ENCODE measurements at regions of chr9 and their contacts with region 1.

Region 1: DNA sequence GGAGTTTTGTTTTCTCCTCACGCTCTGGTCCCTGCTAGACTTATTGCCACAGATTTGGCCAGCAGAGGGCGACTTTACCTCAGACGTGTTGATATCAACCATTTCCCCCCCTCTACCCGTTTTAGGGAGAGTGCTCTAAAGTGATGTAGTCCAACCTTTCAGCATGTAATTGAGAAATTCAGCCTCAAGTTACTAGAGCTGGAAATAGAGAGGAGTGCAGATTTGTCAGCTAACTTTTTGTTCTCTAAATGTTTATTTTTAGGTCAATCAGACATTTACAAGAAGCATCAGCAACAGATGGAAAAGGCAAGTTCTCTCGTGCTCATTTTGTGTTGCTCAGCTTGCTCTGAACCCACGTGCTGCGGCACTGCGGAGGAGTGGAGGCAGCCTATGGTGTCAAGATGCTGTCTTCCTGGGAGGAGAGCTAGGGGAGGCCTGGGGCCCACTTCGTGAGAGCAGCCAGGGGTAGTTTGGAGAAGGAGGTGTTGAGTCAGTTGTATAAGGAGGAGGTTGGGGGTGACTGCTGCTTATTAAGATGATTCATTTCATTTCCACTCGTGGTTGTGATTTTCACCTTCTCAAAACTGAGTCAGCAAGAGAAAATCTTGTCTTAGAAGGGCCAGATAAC is 53.6 kb downstream of the GPR107 start:
- DNase-seq: peak; percentile 79 to 96 (median 88)
- H3K4me3 ChIP-seq: no peak overlapping the region
- H3K27ac ChIP-seq: peak overlapping the region in 43 of 59 donors; percentile 2 to 79 (median 53)
- H3K27me3 ChIP-seq: no peaks in the 10 kb centered on the region
- CTCF ChIP-seq: peak; percentile 67 to 96 (median 88)

Region 2: GRCh38 chr9:129932303-129933151 is 174.8 kb before region 1 on chr9:
- intact Hi-C with region 1: loop called in 1 of 2 experiments (anchors 5 kb)
- DNase-seq: peak in 1 of 10 donors; percentile 77
- H3K4me3 ChIP-seq: peak overlapping the region in 11 of 59 donors; percentile 0 to 38 (median 10)
- H3K27ac ChIP-seq: peak overlapping the region; percentile 38 to 96 (median 88)
- H3K27me3 ChIP-seq: no peaks in the 10 kb centered on the region
- CTCF ChIP-seq: no peak

Region 3: GRCh38 chr9:130235897-130236668 is 128.7 kb after region 1 on chr9:
- intact Hi-C with region 1: loop called (anchors 1 to 2 kb)
- DNase-seq: peak in 9 of 10 donors; percentile 61 to 81 (median 68)
- H3K4me3 ChIP-seq: peak overlapping the region in 36 of 59 donors; percentile 1 to 47 (median 34)
- H3K27ac ChIP-seq: peak overlapping the region in 55 of 59 donors; percentile 3 to 90 (median 73)
- H3K27me3 ChIP-seq: no peaks in the 10 kb centered on the region
- CTCF ChIP-seq: peak; percentile 97 to 100 (median 99)

Region 4: GRCh38 chr9:130343445-130343918 is 236.1 kb after region 1 on chr9:
- intact Hi-C with region 1: loop called (anchors 5 to 10 kb)
- DNase-seq: peak in 3 of 10 donors; percentile 13 to 27 (median 21)
- H3K4me3 ChIP-seq: no peak overlapping the region
- H3K27ac ChIP-seq: no peak overlapping the region
- H3K27me3 ChIP-seq: peaks cover 0 to 6% (median 0%) of the 10 kb centered on the region in 45 donors
- CTCF ChIP-seq: peak in 55 of 56 donors; percentile 34 to 75 (median 63)